ENCODE measurements at regions of chrX and their contacts with region 1.

Region 1: DNA sequence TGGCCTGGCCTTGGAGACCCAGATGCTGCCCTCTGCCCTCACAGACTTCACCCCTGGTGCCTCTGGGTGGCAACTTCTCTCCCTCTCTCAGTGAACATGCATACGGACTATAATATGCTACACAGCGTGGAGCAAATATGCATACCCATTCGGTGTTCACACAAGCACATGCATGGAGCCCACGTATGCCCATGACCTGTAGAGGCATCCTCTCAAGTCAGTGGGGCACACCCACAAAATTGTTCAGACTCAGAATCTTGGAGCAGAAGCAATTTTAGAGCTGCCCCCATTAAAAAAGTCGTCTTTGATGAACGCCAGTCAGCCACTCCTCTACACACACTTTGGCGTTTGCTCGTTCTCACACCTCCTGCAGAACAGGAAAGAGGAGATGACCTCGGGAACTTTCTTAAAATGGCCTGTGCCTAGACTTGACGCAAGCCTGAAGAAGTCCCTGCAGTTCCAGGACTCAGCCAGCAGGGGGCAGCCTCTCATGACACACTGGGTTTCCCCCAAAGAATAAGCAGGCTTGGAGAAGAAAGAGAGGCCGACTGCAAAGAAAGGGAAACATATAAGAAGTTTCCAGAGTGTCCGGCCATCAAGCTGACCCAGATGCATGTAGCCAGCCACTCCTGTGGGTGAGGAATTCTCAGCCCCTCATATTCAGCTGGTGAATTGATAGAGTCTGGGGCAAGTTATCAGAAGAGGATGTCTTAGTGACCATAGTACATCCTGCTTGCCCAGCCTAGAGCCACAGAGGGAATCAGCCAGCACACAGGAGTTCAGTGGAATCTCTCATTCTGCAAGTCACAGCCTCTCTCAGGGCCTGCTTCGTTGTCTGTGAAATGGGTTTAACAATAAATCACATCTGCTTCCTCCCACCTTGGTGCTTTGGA is 17.3 kb downstream of the APLN start:
- DNase-seq: peak; percentile 54 to 73 (median 64)
- ATAC-seq: peak; percentile 84 to 93 (median 92)
- H3K4me3 ChIP-seq: no peak overlapping the region
- H3K27ac ChIP-seq: no peak overlapping the region
- H3K4me1 ChIP-seq: no peaks in the 10 kb centered on the region
- H3K27me3 ChIP-seq: no peaks in the 10 kb centered on the region
- CTCF ChIP-seq: peak; percentile 85 to 91 (median 89)
- POLR2A ChIP-seq: no peak

Region 2: GRCh38 chrX:129719931-129720530 is 82.6 kb after region 1 on chrX:
- intact Hi-C with region 1: loop called (anchors 5 to 10 kb)
- DNase-seq: no peak
- ATAC-seq: no peak
- H3K4me3 ChIP-seq: no peak overlapping the region
- H3K27ac ChIP-seq: no peak overlapping the region
- H3K4me1 ChIP-seq: no peaks in the 10 kb centered on the region
- H3K27me3 ChIP-seq: no peaks in the 10 kb centered on the region
- CTCF ChIP-seq: no peak
- POLR2A ChIP-seq: no peak

Region 3: DNA sequence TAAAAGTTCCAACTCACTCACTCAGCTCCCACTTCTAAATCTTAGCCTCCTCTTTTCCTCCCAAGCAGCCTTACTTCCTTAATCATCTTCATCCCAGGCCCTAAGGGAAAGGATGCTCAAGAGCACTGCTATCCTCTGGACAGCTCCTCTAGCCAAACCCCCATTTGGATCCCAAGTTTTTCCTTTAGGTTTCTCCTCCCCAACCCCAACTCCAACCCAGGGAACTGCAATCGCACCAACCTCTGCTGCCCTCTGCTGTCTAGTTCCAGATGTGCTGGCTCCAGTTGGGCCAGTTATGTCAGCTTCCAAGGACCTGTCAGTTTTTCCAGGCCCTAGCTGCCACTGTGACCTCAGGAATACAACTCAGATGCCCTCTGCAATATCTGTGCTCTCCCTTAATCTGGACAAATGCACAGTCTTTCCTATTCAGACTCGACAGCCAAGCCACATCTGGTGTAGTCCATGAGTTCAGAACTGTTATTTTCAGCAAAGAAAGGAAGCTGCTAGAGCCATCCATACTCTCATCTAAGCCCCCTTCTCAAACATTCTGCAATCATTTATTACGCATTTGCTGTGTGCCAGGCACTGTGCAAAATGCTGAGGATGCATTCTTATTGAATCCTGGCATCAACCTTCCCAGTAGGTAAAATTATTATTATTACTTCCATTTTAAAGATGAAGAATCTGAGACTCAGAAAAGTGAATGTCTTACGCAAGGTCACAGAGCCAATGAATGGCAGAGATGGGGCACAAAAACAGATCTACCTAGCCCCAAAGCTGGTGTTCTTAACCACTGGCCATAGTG is 89.0 kb after region 1 on chrX:
- intact Hi-C with region 1: loop called (anchors 5 to 10 kb)
- DNase-seq: peak; percentile 59 to 66 (median 63)
- ATAC-seq: peak; percentile 93 to 99 (median 96)
- H3K4me3 ChIP-seq: no peak overlapping the region
- H3K27ac ChIP-seq: no peak overlapping the region
- H3K4me1 ChIP-seq: no peaks in the 10 kb centered on the region
- H3K27me3 ChIP-seq: no peaks in the 10 kb centered on the region
- CTCF ChIP-seq: peak; percentile 68 to 79 (median 74)
- POLR2A ChIP-seq: no peak